ENCODE measurements at regions of chr15 and their contacts with region 1.

Region 1: GRCh38 chr15:42056934-42057779 is 36.3 kb upstream of the PLA2G4E start:
- DNase-seq: peak; percentile 80 to 92 (median 90)
- ATAC-seq: peak; percentile 94
- H3K4me3 ChIP-seq: no peak overlapping the region
- H3K27ac ChIP-seq: no peak overlapping the region
- H3K4me1 ChIP-seq: no peaks in the 10 kb centered on the region
- H3K27me3 ChIP-seq: no peaks in the 10 kb centered on the region

Region 2: GRCh38 chr15:41512940-41513510 is 544.1 kb before region 1 on chr15:
- intact Hi-C with region 1: no loop called
- DNase-seq: peak in 2 of 3 donors; percentile 34 to 68
- ATAC-seq: peak in 1 of 2 donors; percentile 56
- H3K4me3 ChIP-seq: peak overlapping the region; percentile 55
- H3K27ac ChIP-seq: no peak overlapping the region
- H3K4me1 ChIP-seq: peaks cover 7% of the 10 kb centered on the region
- H3K27me3 ChIP-seq: no peaks in the 10 kb centered on the region

Region 3: GRCh38 chr15:41989259-41989933 is 67.8 kb before region 1 on chr15:
- intact Hi-C with region 1: loop called (anchors 2 kb)
- DNase-seq: peak; percentile 77 to 94 (median 93)
- ATAC-seq: peak; percentile 87 to 88
- H3K4me3 ChIP-seq: no peak overlapping the region
- H3K27ac ChIP-seq: no peak overlapping the region
- H3K4me1 ChIP-seq: no peaks in the 10 kb centered on the region
- H3K27me3 ChIP-seq: no peaks in the 10 kb centered on the region

Region 4: GRCh38 chr15:42094512-42094963 is 37.4 kb after region 1 on chr15 and contains the start of gene PLA2G4D:
- intact Hi-C with region 1: no loop called
- DNase-seq: no peak
- ATAC-seq: peak in 1 of 2 donors; percentile 8
- H3K4me3 ChIP-seq: no peak within 1 kb of the TSS
- H3K27ac ChIP-seq: no peak within 1 kb of the TSS
- H3K4me1 ChIP-seq: no peaks in the 10 kb centered on the region
- H3K27me3 ChIP-seq: no peaks in the 10 kb centered on the region
- total RNA-seq, gene PLA2G4D: not detected

Measured in right cardiac atrium (tissue), 5 donors.